ENCODE measurements at regions of chr5 and their contacts with region 1.

Region 1: DNA sequence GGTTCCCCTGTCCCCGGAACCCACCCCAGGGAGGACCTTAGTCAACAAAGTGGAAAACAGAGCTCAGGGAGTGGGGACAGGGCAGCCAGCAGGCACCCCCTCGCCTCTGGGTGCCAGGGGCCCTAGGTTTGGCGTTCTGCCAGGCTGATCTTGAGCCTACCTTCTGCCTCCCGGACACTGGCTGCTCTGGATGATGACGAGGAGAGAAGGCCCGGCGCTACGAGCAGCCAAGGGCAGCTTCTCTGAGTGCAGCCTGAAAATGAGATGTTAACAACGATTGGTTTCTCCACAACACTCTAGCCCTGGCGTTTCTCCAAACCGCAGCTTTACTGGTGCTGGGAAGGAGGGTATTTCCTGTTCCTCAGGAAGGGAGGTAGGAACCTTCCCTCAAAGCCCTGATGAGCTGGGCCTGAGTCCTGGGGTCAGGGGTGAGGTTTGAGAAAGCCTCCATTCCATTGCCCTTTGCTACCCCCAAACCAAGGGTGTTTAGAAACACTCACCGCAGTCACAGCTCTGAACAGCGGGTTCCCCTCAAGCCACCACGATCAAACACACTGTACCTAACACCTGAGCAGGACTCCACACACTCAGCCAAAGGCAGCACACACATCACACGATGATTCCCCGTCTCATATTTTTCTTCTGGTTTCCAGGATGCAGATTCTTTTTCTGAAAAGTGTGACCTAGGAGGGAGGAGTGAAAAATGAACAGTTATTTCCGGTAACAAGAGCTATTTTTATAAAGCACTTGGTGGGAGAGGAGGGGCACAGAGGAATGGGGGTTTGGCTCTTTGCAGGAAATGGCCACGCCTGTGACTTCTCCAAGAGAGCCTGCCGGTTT is at the start of gene STING1:
- DNase-seq: peak; percentile 84
- ATAC-seq: peak; percentile 64
- H3K4me3 Mint-ChIP-seq: peak within 1 kb of the TSS; percentile 88
- H3K27ac Mint-ChIP-seq: peak within 1 kb of the TSS; percentile 99
- H3K4me1 Mint-ChIP-seq: peaks cover 35% of the 10 kb centered on the region
- H3K27me3 Mint-ChIP-seq: no peaks in the 10 kb centered on the region
- total RNA-seq, gene STING1: 178 to 183 TPM

Region 2: DNA sequence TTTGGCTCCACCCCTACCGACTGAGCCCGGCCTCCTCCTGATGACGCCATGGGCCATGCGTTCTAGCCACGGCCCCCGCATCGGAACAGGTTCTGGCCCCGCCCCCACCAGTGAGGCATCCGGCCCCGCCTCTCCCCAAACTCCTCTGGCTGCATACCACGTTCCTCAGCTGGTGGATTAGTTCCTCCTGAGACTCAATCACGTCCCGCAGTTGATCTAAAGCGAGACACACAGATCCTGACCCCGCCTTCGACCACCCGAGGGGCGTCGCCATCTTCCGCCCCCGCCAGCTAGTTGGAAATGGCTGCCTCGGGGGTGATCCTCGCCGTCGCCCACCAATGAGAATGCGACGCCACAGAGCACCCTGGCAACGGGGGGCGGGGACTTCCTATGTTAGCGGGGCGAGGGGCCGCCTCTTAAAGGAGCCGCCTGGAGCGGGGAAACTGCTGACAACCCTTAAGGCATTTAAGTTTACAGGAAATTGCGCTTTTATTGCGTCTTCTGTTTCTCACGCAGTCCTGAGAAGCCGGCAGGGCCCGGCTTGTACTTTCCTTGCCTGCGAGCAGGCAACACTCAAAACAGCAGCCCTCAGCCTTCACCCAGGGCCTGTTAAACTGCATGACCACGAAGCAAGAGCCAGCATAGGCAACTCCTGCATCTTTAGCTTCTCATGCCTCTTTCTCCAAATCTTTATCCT is 78.3 kb before region 1 on chr5 and contains the start of gene SPATA24:
- CTCF ChIA-PET with region 1: no interaction called
- POLR2A ChIA-PET with region 1: interaction called, 3 read pairs
- intact Hi-C with region 1: loop called in 1 of 2 experiments (anchors 1 kb)
- DNase-seq: peak; percentile 100
- ATAC-seq: peak; percentile 93
- H3K4me3 Mint-ChIP-seq: peak within 1 kb of the TSS; percentile 79
- H3K27ac Mint-ChIP-seq: peak within 1 kb of the TSS; percentile 99
- H3K4me1 Mint-ChIP-seq: peaks cover 37% of the 10 kb centered on the region
- H3K27me3 Mint-ChIP-seq: no peaks in the 10 kb centered on the region
- total RNA-seq, gene SPATA24: 4.6 to 5.9 TPM

Region 3: GRCh38 chr5:139422307-139422893 is 59.9 kb before region 1 on chr5:
- CTCF ChIA-PET with region 1: interaction called, 32 read pairs
- POLR2A ChIA-PET with region 1: interaction called, 3 read pairs
- intact Hi-C with region 1: loop called (anchors 1 kb)
- DNase-seq: peak; percentile 66
- ATAC-seq: peak; percentile 93
- H3K4me3 Mint-ChIP-seq: no peak overlapping the region
- H3K27ac Mint-ChIP-seq: no peak overlapping the region
- H3K4me1 Mint-ChIP-seq: peaks cover 5% of the 10 kb centered on the region
- H3K27me3 Mint-ChIP-seq: no peaks in the 10 kb centered on the region

Region 4: DNA sequence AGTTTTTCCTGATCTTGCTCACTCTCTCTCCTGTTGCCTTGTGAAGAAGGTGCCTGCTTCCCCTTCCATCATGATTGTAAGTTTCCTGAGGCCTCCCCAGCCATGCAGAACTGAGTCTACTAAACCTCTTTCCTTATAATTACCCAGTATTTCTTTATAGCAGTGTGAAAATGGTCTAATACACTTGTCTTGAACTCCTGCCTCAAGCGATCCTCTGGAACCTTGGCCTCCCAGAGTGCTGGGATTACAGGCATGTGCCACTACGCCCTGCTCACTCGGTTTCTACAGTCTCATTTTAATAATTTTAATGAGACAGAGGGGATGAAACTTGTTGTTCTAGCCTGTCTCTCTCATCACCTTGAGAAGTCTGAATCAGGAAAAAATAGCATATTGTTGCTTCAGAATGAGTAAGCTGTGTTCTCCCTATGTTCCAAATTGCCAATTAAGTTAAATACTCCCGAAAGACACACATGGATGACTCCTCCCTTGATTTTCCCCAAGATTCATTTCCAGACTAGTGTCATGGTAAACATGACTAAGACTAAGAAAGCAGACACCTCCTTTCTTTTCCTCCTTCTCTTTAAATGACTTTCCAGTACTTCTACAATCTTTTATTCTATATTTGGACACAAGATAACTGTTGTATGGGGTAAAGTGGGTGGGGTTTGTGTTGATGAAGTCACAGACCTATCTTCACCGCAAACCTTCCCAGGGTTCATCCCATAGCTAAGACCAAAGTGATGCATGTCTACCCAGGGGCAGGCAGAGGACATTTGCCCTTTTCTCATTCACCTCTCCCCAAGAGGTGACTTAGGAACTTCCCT is 35.1 kb before region 1 on chr5:
- CTCF ChIA-PET with region 1: interaction called, 3 read pairs
- POLR2A ChIA-PET with region 1: interaction called, 6 read pairs
- intact Hi-C with region 1: loop called (anchors 2 kb)
- DNase-seq: peak; percentile 68
- ATAC-seq: peak; percentile 77
- H3K4me3 Mint-ChIP-seq: peak overlapping the region; percentile 1
- H3K27ac Mint-ChIP-seq: peak overlapping the region; percentile 92
- H3K4me1 Mint-ChIP-seq: peaks cover 66% of the 10 kb centered on the region
- H3K27me3 Mint-ChIP-seq: no peaks in the 10 kb centered on the region

Region 5: DNA sequence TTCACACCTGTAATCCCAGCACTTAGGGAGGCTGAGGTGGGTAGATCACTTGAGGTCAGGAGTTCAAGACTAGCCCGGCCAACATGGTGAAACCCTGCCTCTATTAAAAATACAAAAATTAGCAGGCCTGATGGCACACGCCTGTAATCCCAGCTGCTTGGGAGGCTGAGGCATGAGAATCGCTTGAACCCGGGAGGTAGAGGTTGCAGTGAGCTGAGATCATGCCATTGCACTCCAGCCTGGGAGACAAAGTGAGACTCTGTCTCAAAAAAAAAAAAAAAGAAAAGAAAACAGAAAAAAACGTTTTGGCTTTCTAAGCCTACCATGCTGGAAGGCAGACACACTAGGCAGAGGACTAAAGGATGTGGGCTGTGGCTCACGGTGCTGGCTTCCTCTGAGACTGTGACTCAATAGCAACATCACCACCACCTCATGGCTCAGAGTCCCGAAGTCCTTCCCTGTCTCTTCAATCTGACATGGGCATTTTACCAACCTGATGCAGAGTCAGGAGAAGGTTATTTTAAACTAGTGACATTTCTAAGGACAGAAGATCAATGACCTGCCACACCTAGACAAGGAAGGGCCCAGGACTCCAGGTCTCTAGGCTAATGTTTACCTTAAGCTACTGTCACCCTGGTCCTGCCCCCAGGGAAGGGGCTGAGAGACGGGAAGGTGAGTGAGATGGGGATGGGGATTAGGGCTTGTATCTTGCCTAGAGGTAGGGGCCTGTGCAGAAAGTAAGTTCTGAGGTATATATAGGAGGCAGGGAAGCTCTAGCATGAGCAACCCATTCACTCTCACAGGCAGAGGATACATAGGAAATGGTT is 23.5 kb before region 1 on chr5:
- CTCF ChIA-PET with region 1: interaction called, 5 read pairs
- POLR2A ChIA-PET with region 1: interaction called, 11 read pairs
- intact Hi-C with region 1: loop called in 1 of 2 experiments (anchors 1 kb)
- DNase-seq: peak; percentile 90
- ATAC-seq: peak; percentile 91
- H3K4me3 Mint-ChIP-seq: peak overlapping the region; percentile 57
- H3K27ac Mint-ChIP-seq: peak overlapping the region; percentile 94
- H3K4me1 Mint-ChIP-seq: peaks cover 64% of the 10 kb centered on the region
- H3K27me3 Mint-ChIP-seq: no peaks in the 10 kb centered on the region

Region 6: DNA sequence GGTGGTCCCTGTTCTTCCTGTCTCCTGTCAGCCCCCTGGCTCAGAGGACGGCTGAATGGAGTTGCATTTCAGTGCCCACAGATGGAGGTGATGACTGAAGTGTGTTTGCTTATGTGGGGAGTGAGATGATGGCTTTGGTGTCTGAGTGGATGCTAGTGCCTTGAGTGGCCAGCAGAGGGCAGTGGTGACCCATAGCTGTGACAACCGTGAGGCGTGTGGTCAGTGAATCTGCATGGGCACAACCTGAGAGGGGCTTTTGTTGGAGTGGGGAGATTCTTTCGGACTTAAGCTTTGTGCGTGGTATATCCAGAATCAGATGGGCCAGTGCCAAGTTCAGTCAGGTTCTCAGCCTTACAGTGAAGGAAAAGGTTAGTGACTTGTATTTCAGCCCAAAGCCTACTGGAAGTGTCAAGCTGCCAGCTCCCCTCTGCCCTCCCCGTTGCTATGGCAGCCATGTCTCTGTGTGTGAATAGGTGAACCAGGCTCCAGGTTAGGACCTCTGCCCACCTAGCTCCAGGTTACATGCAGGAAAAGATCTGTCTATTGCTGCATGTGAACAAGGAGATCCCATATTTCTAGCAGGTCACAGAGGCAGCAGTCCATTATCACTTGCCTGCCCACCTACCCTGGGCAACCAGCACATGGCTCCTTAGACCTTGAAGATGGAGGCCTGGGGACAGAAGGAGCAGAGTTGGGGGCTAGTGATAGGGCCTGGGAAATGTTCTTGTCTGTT is 151.2 kb after region 1 on chr5:
- CTCF ChIA-PET with region 1: no interaction called
- POLR2A ChIA-PET with region 1: no interaction called
- intact Hi-C with region 1: no loop called
- DNase-seq: peak; percentile 81
- ATAC-seq: peak; percentile 24
- H3K4me3 Mint-ChIP-seq: no peak overlapping the region
- H3K27ac Mint-ChIP-seq: peak overlapping the region; percentile 52
- H3K4me1 Mint-ChIP-seq: peaks cover 37% of the 10 kb centered on the region
- H3K27me3 Mint-ChIP-seq: no peaks in the 10 kb centered on the region

Region 7: DNA sequence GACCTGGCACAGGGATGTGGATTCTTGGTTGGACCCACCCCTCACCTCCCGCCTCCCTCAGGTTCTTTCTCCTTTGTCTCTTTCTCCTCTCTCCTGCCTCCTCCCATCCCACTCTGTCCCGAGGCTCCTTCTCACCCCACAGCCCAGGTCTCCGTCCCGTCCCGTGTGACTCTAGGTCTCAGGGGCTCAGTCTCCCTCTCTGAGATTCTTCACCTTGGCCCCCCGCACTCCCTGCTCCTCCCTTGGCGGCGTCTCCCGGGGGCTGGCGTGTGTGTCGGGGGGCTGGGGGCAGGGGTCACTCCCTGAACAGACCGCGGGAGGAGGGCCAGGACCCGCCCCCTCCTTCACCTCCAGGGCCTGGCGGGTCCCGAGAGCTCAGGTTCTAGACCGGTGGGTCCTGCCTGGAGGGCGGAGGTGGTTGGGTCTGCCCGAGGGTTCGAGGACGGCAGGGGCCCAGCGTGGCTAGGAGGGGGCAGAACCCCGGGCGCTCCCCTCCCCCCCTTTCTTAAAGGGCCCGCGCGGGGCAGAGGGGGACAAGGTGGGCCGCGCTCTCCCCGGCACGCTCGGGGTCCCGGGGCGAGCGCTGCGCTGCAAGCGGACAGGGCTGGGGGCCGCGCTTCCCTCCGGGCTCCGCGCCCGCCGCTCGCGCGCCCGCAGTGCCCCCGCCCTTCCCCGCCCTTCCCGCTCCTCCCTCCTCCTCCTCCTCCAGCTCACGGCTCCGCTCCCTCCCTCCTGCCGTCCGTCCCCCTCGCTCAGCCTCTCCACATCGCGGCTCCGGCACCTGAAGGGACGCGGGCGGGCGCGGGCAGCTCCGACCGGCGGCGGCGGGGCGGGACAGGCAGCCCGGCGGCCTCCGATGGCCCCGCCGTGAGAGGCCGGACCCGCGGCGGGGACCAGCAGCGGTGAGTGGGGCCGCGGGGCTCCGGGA is 313.1 kb after region 1 on chr5 and contains the start of gene PSD2:
- CTCF ChIA-PET with region 1: no interaction called
- POLR2A ChIA-PET with region 1: no interaction called
- intact Hi-C with region 1: no loop called
- DNase-seq: peak; percentile 44
- ATAC-seq: peak; percentile 56
- H3K4me3 Mint-ChIP-seq: no peak within 1 kb of the TSS
- H3K27ac Mint-ChIP-seq: no peak within 1 kb of the TSS
- H3K4me1 Mint-ChIP-seq: peaks cover 2% of the 10 kb centered on the region
- H3K27me3 Mint-ChIP-seq: peaks cover 52% of the 10 kb centered on the region
- total RNA-seq, gene PSD2: not detected